Endothelial cell of umbilical vein (primary cell): ENCODE measurements at regions of chr22 and their contacts with region 1.

Region 1: GRCh38 chr22:37166675-37167066 is 17.0 kb upstream of the IL2RB start:
- DNase-seq: peak; percentile 82
- H3K4me3 ChIP-seq: no peak overlapping the region
- H3K27ac ChIP-seq: no peak overlapping the region
- H3K4me1 ChIP-seq: no peaks in the 10 kb centered on the region
- H3K27me3 ChIP-seq: no peaks in the 10 kb centered on the region
- CTCF ChIP-seq: peak; percentile 92 to 95
- POLR2A ChIP-seq: no peak

Region 2: GRCh38 chr22:37077884-37078485 is 88.7 kb before region 1 on chr22:
- CTCF ChIA-PET with region 1: no interaction called
- POLR2A ChIA-PET with region 1: no interaction called
- dilution Hi-C with region 1: no loop called
- intact Hi-C with region 1: loop called (anchors 1 kb)
- DNase-seq: peak; percentile 38
- H3K4me3 ChIP-seq: no peak overlapping the region
- H3K27ac ChIP-seq: no peak overlapping the region
- H3K4me1 ChIP-seq: peaks cover 9% of the 10 kb centered on the region
- H3K27me3 ChIP-seq: peaks cover 0 to 6% of the 10 kb centered on the region in 2 experiments
- CTCF ChIP-seq: peak; percentile 98 to 99
- POLR2A ChIP-seq: no peak

Region 3: GRCh38 chr22:37676736-37677492 is 510.2 kb after region 1 on chr22:
- CTCF ChIA-PET with region 1: no interaction called
- POLR2A ChIA-PET with region 1: no interaction called
- dilution Hi-C with region 1: no loop called
- intact Hi-C with region 1: no loop called
- DNase-seq: peak; percentile 95
- H3K4me3 ChIP-seq: peak overlapping the region; percentile 63 to 80 (median 66)
- H3K27ac ChIP-seq: peak overlapping the region; percentile 81
- H3K4me1 ChIP-seq: peaks cover 9% of the 10 kb centered on the region
- H3K27me3 ChIP-seq: no peaks in the 10 kb centered on the region
- CTCF ChIP-seq: no peak
- POLR2A ChIP-seq: peak; percentile 81